Activated T-helper 2 cell treated with anti-CD3 and anti-CD28 coated beads, Interferon-gamma antibody, Interleukin-2, Interleukin-4, amounts not matched to agents 10 μg/mL and 5 μg/mL and 100 μg/mL, durations not matched to agents 14 hours and 24 hours and 36 hours (primary cell): ENCODE measurements at regions of chr7 and their contacts with region 1.

Region 1: GRCh38 chr7:116236020-116236630 is 25.8 kb downstream of the TES start:
- DNase-seq: no peak
- H3K4me3 Mint-ChIP-seq: no peak overlapping the region
- H3K27ac Mint-ChIP-seq: no peak overlapping the region
- H3K4me1 Mint-ChIP-seq: peaks cover 45% of the 10 kb centered on the region
- H3K27me3 Mint-ChIP-seq: no peaks in the 10 kb centered on the region

Region 2: GRCh38 chr7:116173051-116174028 is 62.8 kb before region 1 on chr7:
- intact Hi-C with region 1: loop called (anchors 2 kb)
- DNase-seq: no peak
- H3K4me3 Mint-ChIP-seq: no peak overlapping the region
- H3K27ac Mint-ChIP-seq: no peak overlapping the region
- H3K4me1 Mint-ChIP-seq: peaks cover 3% of the 10 kb centered on the region
- H3K27me3 Mint-ChIP-seq: peaks cover 34% of the 10 kb centered on the region

Region 3: GRCh38 chr7:116195451-116195850 is 40.7 kb before region 1 on chr7:
- intact Hi-C with region 1: loop called (anchors 5 kb)
- DNase-seq: no peak
- H3K4me3 Mint-ChIP-seq: no peak overlapping the region
- H3K27ac Mint-ChIP-seq: no peak overlapping the region
- H3K4me1 Mint-ChIP-seq: no peaks in the 10 kb centered on the region
- H3K27me3 Mint-ChIP-seq: peaks cover 32% of the 10 kb centered on the region

Region 4: GRCh38 chr7:116802746-116803152 is 566.6 kb after region 1 on chr7:
- intact Hi-C with region 1: loop called (anchors 5 kb)
- DNase-seq: peak; percentile 14
- H3K4me3 Mint-ChIP-seq: no peak overlapping the region
- H3K27ac Mint-ChIP-seq: peak overlapping the region; percentile 40
- H3K4me1 Mint-ChIP-seq: peaks cover 12% of the 10 kb centered on the region
- H3K27me3 Mint-ChIP-seq: peaks cover 6% of the 10 kb centered on the region